ENCODE measurements at regions of chr7 and their contacts with region 1.

Region 1: DNA sequence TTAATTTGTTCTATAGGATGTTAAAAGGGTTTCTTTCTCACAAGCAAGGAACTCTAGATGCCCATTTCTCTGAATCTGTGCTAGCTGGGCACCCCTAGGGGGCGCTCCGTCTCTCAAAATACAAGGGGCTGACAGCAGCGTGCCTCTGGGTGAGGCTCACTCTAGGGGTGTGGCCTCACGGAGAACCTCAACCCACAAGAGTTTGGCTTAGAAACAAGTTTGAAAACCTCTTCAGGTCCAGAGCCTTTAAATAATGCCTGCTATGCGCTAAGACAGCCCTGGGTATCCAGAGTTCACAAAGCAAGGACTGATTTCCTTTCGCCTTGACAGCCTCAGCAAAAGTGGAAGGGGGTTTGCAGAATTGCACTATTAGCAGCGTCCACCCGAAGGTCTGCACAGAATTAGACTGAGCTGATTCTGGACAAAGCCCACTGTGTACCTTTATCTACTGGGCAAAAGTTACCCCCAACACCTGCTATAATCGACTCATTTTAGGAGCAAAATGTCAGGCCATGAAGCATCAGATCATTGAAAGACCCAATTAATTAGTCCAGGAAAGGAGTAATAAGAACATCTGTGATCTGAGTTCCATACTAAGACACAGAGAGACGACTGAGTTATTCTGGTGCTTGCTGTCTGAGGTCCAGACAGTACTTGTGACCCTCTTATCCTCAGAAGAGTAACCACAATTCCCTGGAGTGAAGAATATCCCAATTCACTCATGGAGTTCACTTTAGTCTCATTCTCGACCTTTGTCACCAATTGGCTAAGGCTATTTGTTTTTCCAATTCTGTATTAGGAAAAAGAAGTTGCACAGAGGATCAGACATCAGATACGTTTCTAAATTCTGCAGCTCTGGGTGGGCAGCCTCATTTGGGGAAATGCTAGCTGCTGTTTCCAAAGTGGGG is 574 bp upstream of the CPED1 start:
- DNase-seq: peak; percentile 89 to 94 (median 89)
- ATAC-seq: peak; percentile 96
- H3K4me3 ChIP-seq: no peak overlapping the region
- H3K4me1 ChIP-seq: peaks cover 10% of the 10 kb centered on the region
- CTCF ChIP-seq: peak; percentile 90

Region 2: GRCh38 chr7:121081327-121081936 is 93.5 kb after region 1 on chr7:
- intact Hi-C with region 1: loop called (anchors 1 to 5 kb)
- DNase-seq: peak in 1 of 3 donors; percentile 14
- ATAC-seq: peak; percentile 68
- H3K4me3 ChIP-seq: no peak overlapping the region
- H3K4me1 ChIP-seq: no peaks in the 10 kb centered on the region
- CTCF ChIP-seq: no peak

Region 3: DNA sequence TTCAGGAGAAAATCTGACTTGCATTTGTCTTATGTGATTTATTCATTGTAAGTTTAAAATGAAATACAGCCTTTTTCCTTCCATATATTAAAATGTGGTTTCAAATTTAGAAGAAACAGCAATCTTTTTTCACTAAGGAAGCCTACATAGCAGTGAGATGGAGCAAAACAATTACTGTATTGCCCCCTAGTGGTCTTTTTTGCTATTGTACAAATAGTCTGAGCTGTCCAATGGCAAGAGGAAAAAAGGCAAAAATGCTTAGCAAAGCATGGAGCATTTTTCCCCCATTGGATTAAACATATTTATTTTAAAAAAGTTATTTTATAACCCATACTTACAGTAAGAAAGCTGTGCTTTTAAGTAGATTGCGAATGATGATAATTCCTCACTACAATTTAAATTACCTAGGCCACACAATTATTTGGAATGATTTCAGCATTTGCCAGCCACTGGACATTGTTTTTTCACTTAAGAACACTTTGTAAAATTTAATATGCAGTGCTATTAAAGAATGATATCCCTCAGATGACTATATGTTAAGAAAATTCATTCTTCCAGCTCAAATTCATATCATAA is 120.1 kb after region 1 on chr7:
- intact Hi-C with region 1: loop called in 1 of 2 experiments (anchors 5 kb)
- DNase-seq: peak in 1 of 3 donors; percentile 10
- ATAC-seq: peak; percentile 77
- H3K4me3 ChIP-seq: no peak overlapping the region
- H3K4me1 ChIP-seq: no peaks in the 10 kb centered on the region
- CTCF ChIP-seq: peak; percentile 51